SK-N-SH (cell line): ENCODE measurements at regions of chr11 and their contacts with region 1.

Region 1: GRCh38 chr11:117946842-117947526 is 17.8 kb upstream of the TMPRSS13 start:
- DNase-seq: peak; percentile 85
- H3K4me3 ChIP-seq: peak overlapping the region in 1 of 2 experiments; percentile 39; a peak in 1 of 4 replicates
- H3K27ac ChIP-seq: no peak overlapping the region
- H3K4me1 ChIP-seq: no peaks in the 10 kb centered on the region; a peak in 1 of 4 replicates
- H3K27me3 ChIP-seq: no peaks in the 10 kb centered on the region; the same call in 1 of the 2 replicates
- CTCF ChIP-seq: peak; percentile 96
- EP300 ChIP-seq: no peak
- RAD21 ChIP-seq: peak; percentile 99

Region 2: DNA sequence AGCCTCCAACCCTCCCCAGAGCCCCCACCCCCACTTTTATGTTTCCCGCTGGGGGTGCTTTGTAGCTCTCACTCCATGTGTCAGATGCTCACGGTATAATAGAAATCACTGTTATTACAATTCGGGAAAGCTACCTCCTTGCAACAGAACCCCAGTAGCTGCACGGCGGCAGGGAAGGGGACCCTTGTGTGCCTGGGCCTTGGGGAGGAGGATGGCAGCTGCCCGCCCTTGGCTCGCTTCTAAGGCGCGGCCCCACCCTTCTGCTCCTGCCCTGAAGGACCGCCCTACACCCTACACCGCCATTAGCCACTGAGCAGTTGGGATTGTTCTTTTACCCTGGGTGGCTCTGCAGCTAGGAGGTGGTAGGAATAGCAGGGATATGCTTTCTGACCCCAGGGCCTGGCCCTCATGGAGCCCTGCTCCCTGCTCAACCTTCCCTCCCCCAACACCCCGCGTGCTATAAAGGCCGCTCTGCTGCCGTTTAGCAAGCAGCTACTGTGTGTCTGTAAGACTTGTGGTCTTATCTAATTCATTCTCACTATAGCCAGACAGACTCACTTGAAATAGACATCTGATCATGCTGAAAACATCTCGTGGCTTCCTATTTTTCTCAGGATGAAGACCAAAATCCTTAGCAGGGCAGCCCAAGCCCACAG is 399.7 kb before region 1 on chr11:
- CTCF ChIA-PET with region 1: no interaction called
- POLR2A ChIA-PET with region 1: no interaction called
- DNase-seq: no peak
- H3K4me3 ChIP-seq: no peak overlapping the region
- H3K27ac ChIP-seq: no peak overlapping the region
- H3K4me1 ChIP-seq: no peaks in the 10 kb centered on the region; a peak in 1 of 4 replicates
- H3K27me3 ChIP-seq: 0 out of 2 replicates have a peak, but pooled peaks cover 5% of the 10 kb centered on the region
- CTCF ChIP-seq: no peak
- EP300 ChIP-seq: no peak
- RAD21 ChIP-seq: no peak

Region 3: DNA sequence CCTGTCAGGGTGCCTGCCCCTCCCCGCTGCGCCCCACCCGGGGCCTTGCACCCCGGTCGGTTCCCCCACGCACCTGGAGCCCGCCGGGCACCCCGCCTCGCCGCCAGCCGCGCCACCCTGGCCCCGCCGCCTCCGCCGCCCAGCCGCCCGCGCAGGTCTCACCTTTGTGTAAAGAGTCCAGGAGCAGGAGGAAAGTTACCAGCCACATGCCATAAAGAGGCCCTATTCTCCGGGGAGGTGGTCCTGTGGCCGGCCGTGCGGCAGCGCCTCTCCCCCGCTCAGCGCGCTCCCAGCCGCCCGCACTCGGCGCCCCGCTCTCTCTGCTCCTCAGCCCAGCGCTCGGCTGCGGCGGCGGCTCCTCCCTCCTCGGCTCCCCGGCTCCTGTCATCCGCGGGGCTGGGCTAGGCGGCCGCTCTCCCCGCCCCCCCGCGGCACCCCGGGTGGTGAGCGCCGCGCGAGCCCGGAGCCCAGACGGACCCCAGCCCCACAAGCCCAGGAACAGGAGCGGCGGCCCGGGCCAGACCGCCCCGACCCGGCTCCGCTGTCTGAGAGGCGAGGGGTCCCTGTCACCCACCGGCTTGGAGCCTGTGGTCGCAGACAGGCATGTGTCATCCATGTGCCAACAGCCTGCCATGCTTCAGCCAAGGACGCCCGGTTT is 150.0 kb before region 1 on chr11 and contains the start of gene DSCAML1:
- CTCF ChIA-PET with region 1: interaction called, 10 read pairs
- POLR2A ChIA-PET with region 1: no interaction called
- DNase-seq: peak; percentile 87
- H3K4me3 ChIP-seq: peak within 1 kb of the TSS in 1 of 2 experiments; percentile 34; a peak in 2 of 4 replicates
- H3K27ac ChIP-seq: no peak within 1 kb of the TSS
- H3K4me1 ChIP-seq: peaks cover 0 to 14% of the 10 kb centered on the region in 2 experiments; a peak in 1 of 4 replicates
- H3K27me3 ChIP-seq: peaks cover 35% of the 10 kb centered on the region
- CTCF ChIP-seq: no peak
- EP300 ChIP-seq: no peak
- RAD21 ChIP-seq: no peak
- polyA plus RNA-seq, gene DSCAML1: not detected in 2 replicates

Region 4: GRCh38 chr11:117843666-117844484 is 103.1 kb before region 1 on chr11:
- CTCF ChIA-PET with region 1: interaction called, 481 read pairs
- POLR2A ChIA-PET with region 1: interaction called, 3 read pairs
- DNase-seq: peak; percentile 74
- H3K4me3 ChIP-seq: no peak overlapping the region; a peak in 1 of 4 replicates
- H3K27ac ChIP-seq: no peak overlapping the region
- H3K4me1 ChIP-seq: peaks cover 0 to 2% of the 10 kb centered on the region in 2 experiments; a peak in 1 of 4 replicates
- H3K27me3 ChIP-seq: no peaks in the 10 kb centered on the region; the same call in 1 of the 2 replicates
- CTCF ChIP-seq: peak; percentile 96
- EP300 ChIP-seq: no peak
- RAD21 ChIP-seq: peak; percentile 91

Region 5: DNA sequence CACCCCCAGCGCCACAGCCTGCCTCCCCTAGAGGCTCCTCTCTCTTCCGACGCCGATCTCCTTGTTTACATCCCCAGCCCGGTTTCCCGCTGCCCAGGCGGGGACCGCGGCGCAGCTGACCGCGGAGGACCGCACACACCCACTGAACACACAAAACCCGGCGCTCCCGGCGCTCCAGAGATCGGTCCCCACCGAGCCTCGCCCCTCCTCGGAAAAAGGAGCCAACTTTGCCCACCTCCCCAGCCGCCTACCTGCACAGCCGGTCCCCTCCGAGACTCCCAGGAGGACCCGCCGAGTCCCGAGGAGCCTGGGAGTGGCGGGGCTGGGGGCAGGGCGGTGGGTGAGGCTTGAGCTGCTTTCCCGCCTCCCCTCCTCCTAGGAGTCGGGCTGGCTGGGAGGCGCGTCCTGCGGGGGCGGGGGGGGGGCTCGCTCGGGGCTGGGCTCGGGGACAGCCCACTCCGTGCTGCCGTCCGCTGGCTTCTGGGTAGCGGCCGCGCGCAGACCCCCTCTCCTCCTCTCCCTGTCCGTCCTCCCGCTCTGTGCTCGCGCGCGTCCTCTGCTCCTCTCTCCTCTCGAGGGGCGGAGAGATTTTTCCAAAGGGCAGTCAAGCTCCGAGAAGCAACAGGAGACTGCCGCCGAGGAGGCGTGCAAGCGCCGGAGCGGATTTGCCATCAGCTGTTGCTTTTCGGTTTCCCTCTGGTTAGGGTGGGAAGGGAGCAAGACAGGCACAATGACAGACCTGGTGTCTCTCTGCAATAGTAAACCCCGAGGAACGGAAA is 70.5 kb before region 1 on chr11 and contains the start of gene FXYD6:
- CTCF ChIA-PET with region 1: interaction called, 31 read pairs
- POLR2A ChIA-PET with region 1: interaction called, 4 read pairs
- DNase-seq: peak; percentile 95
- H3K4me3 ChIP-seq: peak within 1 kb of the TSS in 1 of 2 experiments; percentile 53; a peak in 2 of 4 replicates
- H3K27ac ChIP-seq: peak within 1 kb of the TSS in 1 of 2 experiments; percentile 47; a peak in 2 of 4 replicates
- H3K4me1 ChIP-seq: peaks cover 0 to 24% of the 10 kb centered on the region in 2 experiments; a peak in 1 of 4 replicates
- H3K27me3 ChIP-seq: peaks cover 29% of the 10 kb centered on the region
- CTCF ChIP-seq: no peak
- EP300 ChIP-seq: no peak
- RAD21 ChIP-seq: no peak
- polyA plus RNA-seq, gene FXYD6: 1.4 and 4.3 TPM in 2 replicates

Region 6: DNA sequence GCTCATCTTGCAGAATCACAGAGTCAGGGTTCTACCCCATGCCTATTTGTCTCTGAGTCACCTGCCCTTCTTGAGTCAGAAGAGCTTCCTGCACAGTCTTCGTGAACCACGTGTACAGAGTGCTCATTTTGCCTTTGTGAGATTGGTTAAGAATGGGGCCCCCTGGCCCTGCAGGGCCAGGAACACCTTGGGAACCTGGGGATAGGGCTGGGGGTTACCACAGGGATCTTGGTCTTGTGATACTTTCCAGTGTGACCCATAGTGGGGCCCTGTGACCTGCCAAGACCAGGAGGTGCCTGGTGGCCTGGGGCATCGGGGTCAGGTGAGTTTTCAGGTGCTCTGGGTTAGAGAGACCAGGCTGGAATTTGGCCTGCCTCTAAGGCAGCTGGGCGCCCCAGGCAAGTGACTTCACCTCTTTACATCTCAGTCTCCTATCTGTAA is 27.2 kb before region 1 on chr11:
- CTCF ChIA-PET with region 1: interaction called, 14 read pairs
- POLR2A ChIA-PET with region 1: no interaction called
- DNase-seq: no peak
- H3K4me3 ChIP-seq: no peak overlapping the region
- H3K27ac ChIP-seq: no peak overlapping the region
- H3K4me1 ChIP-seq: no peaks in the 10 kb centered on the region
- H3K27me3 ChIP-seq: no peaks in the 10 kb centered on the region; the same call in 1 of the 2 replicates
- CTCF ChIP-seq: no peak
- EP300 ChIP-seq: no peak
- RAD21 ChIP-seq: no peak

Region 7: DNA sequence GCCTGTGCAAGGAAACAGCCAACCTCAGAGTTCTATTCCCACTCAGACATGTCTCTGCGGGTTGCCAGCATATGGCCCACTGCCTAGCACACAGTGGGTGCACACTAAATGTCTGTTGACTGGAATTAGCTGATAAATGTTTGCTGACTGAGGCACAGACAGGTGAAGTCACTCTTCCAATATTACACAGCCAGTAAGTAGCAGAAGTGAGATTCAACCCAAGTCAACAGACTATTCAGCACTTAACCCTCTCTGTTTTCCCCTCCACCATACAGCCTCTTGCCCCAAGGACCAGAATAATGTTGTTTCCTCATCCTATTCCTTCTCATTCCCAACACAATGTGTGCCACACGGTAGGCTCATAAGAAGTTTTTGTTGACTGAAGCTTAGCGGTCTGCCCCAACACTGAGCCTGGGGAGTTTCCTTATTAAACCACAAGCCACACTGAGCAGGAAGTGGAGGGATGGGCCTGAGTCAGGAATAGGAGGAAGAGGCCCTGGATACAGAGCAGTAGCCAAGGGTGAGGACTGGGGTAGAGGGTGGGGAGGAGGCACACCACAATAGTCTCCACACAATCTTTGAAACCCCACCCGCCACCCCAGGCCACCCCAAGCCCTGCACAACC is 23.5 kb after region 1 on chr11:
- CTCF ChIA-PET with region 1: interaction called, 11 read pairs
- POLR2A ChIA-PET with region 1: no interaction called
- DNase-seq: no peak
- H3K4me3 ChIP-seq: no peak overlapping the region
- H3K27ac ChIP-seq: no peak overlapping the region
- H3K4me1 ChIP-seq: no peaks in the 10 kb centered on the region
- H3K27me3 ChIP-seq: no peaks in the 10 kb centered on the region; the same call in 1 of the 2 replicates
- CTCF ChIP-seq: no peak
- EP300 ChIP-seq: no peak
- RAD21 ChIP-seq: no peak

Region 8: GRCh38 chr11:118064956-118065355 is 118.0 kb after region 1 on chr11:
- CTCF ChIA-PET with region 1: interaction called, 11 read pairs
- POLR2A ChIA-PET with region 1: no interaction called
- DNase-seq: no peak
- H3K4me3 ChIP-seq: no peak overlapping the region
- H3K27ac ChIP-seq: no peak overlapping the region
- H3K4me1 ChIP-seq: no peaks in the 10 kb centered on the region
- H3K27me3 ChIP-seq: no peaks in the 10 kb centered on the region; the same call in 1 of the 2 replicates
- CTCF ChIP-seq: no peak
- EP300 ChIP-seq: no peak
- RAD21 ChIP-seq: no peak